Ascending aorta (tissue), 2 donors: ENCODE measurements at regions of chr7 and their contacts with region 1.

Region 1: DNA sequence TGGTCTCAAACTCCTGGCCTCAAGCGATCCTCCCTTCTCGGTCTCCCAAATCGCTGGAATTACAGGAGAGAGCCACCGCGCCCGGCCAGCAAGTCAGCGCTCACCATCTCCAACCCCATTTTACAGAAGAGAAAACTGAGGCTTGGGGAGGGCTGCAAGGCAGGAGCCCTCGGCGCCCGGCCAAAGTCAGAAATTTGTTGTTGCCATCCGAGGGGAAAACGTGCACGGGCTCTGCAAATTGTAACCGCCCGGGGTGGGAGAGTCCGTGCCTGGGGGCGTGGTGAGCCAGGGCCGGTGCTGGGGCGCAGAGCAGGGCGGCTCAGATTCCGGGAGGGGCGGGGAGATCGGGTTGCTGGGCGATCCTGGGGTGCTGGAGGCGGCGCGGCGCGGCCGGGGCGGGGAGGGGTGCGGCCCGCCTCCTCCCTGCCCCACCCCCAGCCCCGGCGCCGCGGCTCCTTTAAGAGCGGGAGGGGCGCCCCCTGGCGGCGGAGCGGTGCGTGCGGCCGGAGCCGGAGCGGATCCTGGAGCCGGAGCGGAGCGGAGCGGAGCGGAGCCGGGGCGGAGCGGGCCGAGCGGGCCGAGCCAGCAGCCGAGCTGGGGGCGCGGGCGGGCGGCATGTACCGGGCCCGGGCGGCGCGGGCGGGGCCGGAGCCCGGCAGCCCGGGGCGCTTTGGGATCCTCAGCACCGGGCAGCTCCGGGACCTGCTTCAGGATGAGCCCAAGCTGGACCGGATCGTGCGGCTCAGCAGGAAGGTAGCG is at the start of gene VPS37D:
- DNase-seq: peak; percentile 42 to 91
- H3K4me3 ChIP-seq: peak within 1 kb of the TSS; percentile 69 to 77
- H3K27ac ChIP-seq: no peak within 1 kb of the TSS
- H3K4me1 ChIP-seq: peaks cover 4 to 11% of the 10 kb centered on the region in 2 donors
- H3K27me3 ChIP-seq: no peaks in the 10 kb centered on the region
- CTCF ChIP-seq: peak; percentile 43 to 98 (median 57)
- total RNA-seq, gene VPS37D: 1.3 TPM

Region 2: GRCh38 chr7:73606801-73607691 is 60.5 kb before region 1 on chr7:
- intact Hi-C with region 1: loop called (anchors 1 kb)
- DNase-seq: no peak
- H3K4me3 ChIP-seq: no peak overlapping the region
- H3K27ac ChIP-seq: no peak overlapping the region
- H3K4me1 ChIP-seq: no peaks in the 10 kb centered on the region
- H3K27me3 ChIP-seq: no peaks in the 10 kb centered on the region
- CTCF ChIP-seq: peak; percentile 91 to 99 (median 98)

Region 3: GRCh38 chr7:73683056-73683964 is 15.8 kb after region 1 on chr7 and contains the starts of genes BUD23 and DNAJC30:
- intact Hi-C with region 1: loop called (anchors 1 kb)
- DNase-seq: peak; percentile 88 to 98
- H3K4me3 ChIP-seq: peak within 1 kb of the TSS; percentile 82 to 99
- H3K27ac ChIP-seq: peak within 1 kb of the TSS; percentile 86 to 90
- H3K4me1 ChIP-seq: peaks cover 7 to 23% of the 10 kb centered on the region in 2 donors
- H3K27me3 ChIP-seq: no peaks in the 10 kb centered on the region
- CTCF ChIP-seq: peak; percentile 5 to 31 (median 8)
- total RNA-seq, gene BUD23: 5.6 TPM
- total RNA-seq, gene DNAJC30: 16.0 TPM

Region 4: GRCh38 chr7:73718905-73719805 is 51.6 kb after region 1 on chr7 and contains the start of gene STX1A:
- intact Hi-C with region 1: loop called (anchors 2 kb)
- DNase-seq: peak in 1 of 2 donors; percentile 81
- H3K4me3 ChIP-seq: peak within 1 kb of the TSS; percentile 93 to 97
- H3K27ac ChIP-seq: peak within 1 kb of the TSS in 1 of 2 donors; percentile 72
- H3K4me1 ChIP-seq: peaks cover 20 to 43% of the 10 kb centered on the region in 2 donors
- H3K27me3 ChIP-seq: no peaks in the 10 kb centered on the region
- CTCF ChIP-seq: no peak
- total RNA-seq, gene STX1A: 13.1 TPM